ENCODE measurements at regions of chr17 and their contacts with region 1.

Region 1: DNA sequence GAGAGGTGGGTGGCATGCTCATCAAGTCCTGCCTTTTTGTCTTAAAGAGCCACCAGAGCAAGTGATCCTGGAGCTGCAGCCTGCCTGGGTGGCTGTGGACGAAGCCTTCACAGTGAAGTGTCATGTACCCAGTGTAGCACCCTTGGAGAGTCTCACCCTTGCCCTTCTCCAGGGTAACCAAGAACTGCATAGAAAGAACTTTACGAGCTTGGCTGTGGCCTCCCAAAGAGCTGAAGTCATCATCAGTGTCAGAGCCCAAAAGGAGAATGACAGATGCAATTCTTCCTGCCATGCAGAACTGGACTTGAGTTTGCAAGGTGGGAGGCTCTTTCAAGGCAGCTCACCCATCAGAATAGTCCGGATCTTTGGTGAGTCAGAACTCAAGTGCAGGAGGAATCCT is 14.2 kb downstream of the CSH2 start:
- DNase-seq: no peak
- H3K4me3 ChIP-seq: no peak overlapping the region
- H3K27ac ChIP-seq: no peak overlapping the region
- H3K4me1 ChIP-seq: no peaks in the 10 kb centered on the region
- H3K27me3 ChIP-seq: peaks cover 10 to 19% of the 10 kb centered on the region in 2 experiments
- CTCF ChIP-seq: no peak
- POLR2A ChIP-seq: no peak

Region 2: DNA sequence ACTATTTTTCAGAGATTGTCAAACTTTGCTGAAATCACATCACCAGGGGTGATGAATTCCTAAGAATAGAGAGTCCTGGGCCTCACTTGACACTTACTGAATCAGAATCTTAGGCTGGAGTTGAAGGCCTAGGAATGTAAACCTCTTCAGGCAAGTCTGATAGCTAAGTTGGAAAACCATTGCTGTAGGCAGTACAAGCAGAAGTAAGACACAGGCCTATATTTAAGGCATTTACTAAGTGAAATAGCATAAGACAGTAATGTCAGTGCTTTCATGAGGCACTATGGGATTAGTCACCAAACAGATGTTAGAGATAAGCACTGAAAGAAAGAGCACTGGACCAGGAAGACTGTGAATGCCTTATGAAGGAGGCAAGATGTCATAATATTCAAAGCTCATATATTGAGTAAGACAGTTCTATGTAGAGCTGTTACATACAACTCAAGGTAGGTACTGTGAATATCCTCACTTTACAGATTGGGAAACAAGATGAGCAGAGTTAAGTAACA is 287.4 kb before region 1 on chr17:
- CTCF ChIA-PET with region 1: no interaction called
- POLR2A ChIA-PET with region 1: no interaction called
- dilution Hi-C with region 1: no loop called
- intact Hi-C with region 1: no loop called
- DNase-seq: peak; percentile 58
- H3K4me3 ChIP-seq: no peak overlapping the region
- H3K27ac ChIP-seq: no peak overlapping the region
- H3K4me1 ChIP-seq: peaks cover 13% of the 10 kb centered on the region
- H3K27me3 ChIP-seq: no peaks in the 10 kb centered on the region
- CTCF ChIP-seq: no peak
- POLR2A ChIP-seq: no peak

Region 3: GRCh38 chr17:63848834-63849700 is 10.2 kb before region 1 on chr17:
- CTCF ChIA-PET with region 1: interaction called, 31 read pairs
- POLR2A ChIA-PET with region 1: no interaction called
- dilution Hi-C with region 1: no loop called
- intact Hi-C with region 1: no loop called
- DNase-seq: peak; percentile 91
- H3K4me3 ChIP-seq: peak overlapping the region in 2 of 3 experiments; percentile 17 to 35
- H3K27ac ChIP-seq: no peak overlapping the region
- H3K4me1 ChIP-seq: no peaks in the 10 kb centered on the region
- H3K27me3 ChIP-seq: peaks cover 0 to 1% of the 10 kb centered on the region in 2 experiments
- CTCF ChIP-seq: peak; percentile 84 to 87
- POLR2A ChIP-seq: no peak

Region 4: DNA sequence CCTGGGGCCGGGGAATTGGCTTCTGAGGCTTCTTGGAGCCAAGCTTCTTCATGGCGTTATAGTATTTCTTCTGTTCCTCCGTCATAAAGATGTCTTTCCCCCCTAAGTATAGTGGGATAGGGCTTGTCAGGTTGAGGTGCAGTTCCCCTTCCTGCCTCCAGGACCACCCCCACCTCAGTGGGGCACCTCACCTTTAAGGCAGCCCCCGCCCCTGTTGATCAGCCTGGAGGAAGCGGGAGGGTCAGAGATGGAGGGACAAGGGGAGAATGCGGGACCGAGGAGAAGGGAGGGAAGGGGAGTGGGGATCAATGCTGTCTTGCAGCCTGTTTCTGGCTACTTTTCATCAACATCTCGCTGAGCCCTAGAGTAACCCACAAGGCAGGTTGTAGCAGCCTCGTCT is 84.5 kb after region 1 on chr17:
- CTCF ChIA-PET with region 1: no interaction called
- POLR2A ChIA-PET with region 1: no interaction called
- dilution Hi-C with region 1: no loop called
- intact Hi-C with region 1: no loop called
- DNase-seq: no peak
- H3K4me3 ChIP-seq: no peak overlapping the region
- H3K27ac ChIP-seq: no peak overlapping the region
- H3K4me1 ChIP-seq: no peaks in the 10 kb centered on the region
- H3K27me3 ChIP-seq: no peaks in the 10 kb centered on the region
- CTCF ChIP-seq: peak in 1 of 2 donors; percentile 4
- POLR2A ChIP-seq: no peak